GM10248 (cell line): ENCODE measurements at regions of chr10 and their contacts with region 1.

Region 1: DNA sequence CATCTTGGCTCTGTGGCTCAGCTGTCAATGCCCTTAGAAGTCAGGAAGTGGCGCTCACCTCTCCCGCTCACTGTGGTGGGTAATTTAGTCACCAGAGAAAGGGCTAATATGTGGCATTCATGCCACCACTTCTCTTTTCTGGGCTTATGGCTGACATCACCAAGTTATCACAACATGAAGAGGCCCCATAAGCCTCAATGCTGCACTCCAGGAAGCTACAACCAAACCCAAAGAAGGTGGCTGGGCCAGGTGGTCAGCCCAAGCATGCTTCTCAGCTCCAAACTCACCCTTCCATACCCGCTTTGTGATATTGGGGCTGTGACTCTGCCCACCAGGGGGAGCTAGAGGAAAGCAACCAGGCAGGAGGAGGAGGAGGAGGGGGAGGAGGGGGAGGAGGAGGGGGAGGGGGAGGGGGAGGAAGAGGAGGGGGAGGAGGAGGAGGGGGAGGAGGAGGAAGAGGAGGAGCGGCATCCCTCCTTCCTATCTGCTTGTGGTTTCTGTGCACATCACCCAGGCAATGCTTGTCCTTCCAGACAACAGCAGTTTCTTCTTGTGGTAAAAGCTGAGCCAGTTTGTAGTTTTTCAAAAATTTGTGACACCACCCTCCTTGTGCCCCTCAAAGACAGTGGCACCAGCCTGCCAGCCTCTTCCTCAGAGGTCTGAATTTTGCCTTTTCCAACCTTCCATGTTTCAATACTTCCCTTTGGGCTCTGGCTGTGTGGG is 42.1 kb downstream of the CYP26A1 start:
- DNase-seq: peak; percentile 67
- CTCF ChIP-seq: peak; percentile 79

Region 2: GRCh38 chr10:92931597-92931996 is 184.2 kb before region 1 on chr10:
- CTCF ChIA-PET with region 1: no interaction called
- POLR2A ChIA-PET with region 1: no interaction called
- DNase-seq: no peak
- CTCF ChIP-seq: no peak

Region 3: DNA sequence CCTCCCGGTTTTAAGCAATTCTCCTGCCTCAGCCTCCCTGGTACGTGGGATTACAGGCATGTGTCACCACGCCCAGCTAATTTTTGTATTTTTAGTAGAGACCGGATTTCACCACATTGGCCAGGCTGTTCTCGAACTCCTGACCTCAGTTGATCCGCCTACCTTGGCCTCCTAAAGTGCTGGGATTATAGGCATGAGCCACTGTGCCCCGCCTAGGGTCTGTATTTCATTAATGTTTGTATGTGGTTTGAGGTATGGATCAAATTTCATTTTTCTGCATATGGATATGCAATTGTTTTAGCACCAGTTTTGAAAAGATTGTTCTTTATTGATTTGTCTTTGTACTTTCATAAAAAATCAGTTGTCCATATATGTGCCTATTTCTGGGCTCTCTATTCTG is 16.2 kb before region 1 on chr10:
- CTCF ChIA-PET with region 1: interaction called, 14 read pairs
- POLR2A ChIA-PET with region 1: no interaction called
- DNase-seq: no peak
- CTCF ChIP-seq: no peak

Region 4: DNA sequence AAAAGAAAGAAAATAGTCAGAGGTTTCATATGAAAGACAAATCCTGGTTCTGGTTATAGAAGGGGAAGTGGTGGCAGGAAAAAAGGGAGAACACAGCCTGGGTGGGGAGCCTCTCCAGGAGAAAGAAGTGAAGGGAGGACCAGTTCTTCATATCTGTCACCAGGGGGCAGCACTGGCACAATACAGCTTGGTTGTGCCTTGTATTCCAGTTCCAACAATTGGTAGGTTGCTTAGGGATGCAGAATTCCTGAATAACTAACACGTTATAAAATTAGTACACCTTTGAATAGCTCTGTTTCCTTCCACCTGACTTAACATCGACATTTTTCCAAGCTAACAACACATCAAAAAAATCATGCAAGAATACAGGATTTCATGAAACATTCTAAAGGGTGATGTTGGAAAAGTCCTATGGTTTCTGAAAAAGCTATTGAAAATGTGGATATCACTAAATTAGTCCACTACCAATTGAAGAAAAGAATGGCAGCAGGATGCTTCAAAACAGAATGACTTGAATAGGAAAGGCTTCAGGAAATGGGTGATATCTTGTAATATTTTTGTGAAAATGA is 10.7 kb after region 1 on chr10:
- CTCF ChIA-PET with region 1: interaction called, 17 read pairs
- POLR2A ChIA-PET with region 1: no interaction called
- DNase-seq: no peak
- CTCF ChIP-seq: no peak

Region 5: DNA sequence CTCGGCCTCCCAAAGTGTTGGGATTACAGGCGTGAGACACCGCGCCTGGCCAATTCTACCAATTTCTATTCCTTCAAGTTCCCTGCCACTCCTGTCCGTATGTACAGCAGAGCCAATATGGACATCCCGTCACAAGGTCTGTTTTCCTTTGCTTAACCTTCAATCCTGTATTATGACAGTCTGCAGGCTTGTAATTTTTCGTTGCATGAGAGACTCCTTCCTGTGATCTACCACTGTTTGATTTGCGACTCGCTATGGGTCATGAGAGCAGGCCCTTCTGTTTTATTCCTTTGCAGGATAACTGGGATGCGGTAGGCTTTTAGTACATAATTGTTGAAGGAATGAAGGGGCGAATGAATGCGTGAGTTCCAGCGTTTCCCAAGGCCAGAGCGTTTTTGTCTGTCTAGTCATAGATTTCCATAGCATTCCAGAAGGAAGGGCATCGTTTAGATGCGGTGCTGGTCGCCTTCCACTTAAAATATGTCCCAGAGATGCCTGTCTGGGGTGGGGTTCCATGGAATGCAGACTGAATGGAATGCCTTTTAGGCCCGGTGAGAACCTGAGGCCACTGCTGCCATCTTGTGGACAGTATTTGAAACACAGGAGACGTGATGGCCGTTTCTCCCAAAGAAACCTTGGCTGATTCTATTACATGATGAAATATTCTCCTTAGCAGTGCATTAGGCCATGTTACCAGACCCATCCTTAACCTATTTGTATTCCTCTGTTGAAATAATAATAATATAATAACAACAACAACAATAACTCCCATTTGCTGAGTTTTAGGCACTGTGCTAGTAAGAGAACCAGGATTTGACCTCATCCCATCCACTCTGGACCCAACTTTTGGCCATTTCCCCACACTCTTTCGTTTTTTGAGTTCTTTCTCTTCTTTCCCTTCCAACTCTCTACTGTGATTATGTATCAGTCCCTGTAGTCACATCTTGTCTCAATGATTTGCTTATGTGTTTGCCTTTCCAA is 173.1 kb after region 1 on chr10:
- CTCF ChIA-PET with region 1: interaction called, 11 read pairs
- POLR2A ChIA-PET with region 1: no interaction called
- DNase-seq: peak; percentile 74
- CTCF ChIP-seq: peak; percentile 81